ENCODE measurements at regions of chr19 and their contacts with region 1.

Region 1: GRCh38 chr19:17470068-17470841 is at the start of gene SLC27A1:
- DNase-seq: peak; percentile 93
- ATAC-seq: peak; percentile 90
- H3K4me3 Mint-ChIP-seq: peak within 1 kb of the TSS; percentile 86
- H3K27ac Mint-ChIP-seq: peak within 1 kb of the TSS; percentile 91
- H3K4me1 Mint-ChIP-seq: peaks cover 25% of the 10 kb centered on the region
- H3K27me3 Mint-ChIP-seq: no peaks in the 10 kb centered on the region
- total RNA-seq, gene SLC27A1: 2.2 to 2.7 TPM

Region 2: DNA sequence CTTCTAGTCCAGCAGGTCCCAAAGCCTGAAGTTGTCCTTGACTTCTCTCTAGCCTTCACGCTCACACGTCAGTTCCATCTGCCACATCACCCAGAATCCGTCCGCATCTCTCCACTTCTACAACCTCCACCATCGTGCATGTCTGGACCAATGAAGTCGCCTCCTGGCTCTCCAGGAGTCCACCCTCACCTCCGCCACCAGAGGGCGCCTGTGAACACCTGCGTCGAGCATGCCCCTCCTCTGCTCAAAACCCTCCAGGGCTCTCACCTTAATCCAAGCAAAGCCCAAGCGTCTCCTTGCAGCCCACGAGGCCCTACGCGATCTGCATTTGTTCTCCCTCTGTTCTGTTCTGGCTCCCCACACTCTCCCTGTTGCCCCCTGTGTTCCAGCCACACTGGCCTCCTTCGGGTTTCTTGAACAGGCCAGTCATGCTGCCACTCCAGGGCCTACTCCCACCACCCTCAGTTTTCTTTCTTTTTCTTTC is 209.4 kb before region 1 on chr19:
- CTCF ChIA-PET with region 1: no interaction called
- POLR2A ChIA-PET with region 1: no interaction called
- intact Hi-C with region 1: loop called in 1 of 2 experiments (anchors 1 kb)
- DNase-seq: peak; percentile 96
- ATAC-seq: peak; percentile 100
- H3K4me3 Mint-ChIP-seq: no peak overlapping the region
- H3K27ac Mint-ChIP-seq: peak overlapping the region; percentile 56
- H3K4me1 Mint-ChIP-seq: peaks cover 6% of the 10 kb centered on the region
- H3K27me3 Mint-ChIP-seq: no peaks in the 10 kb centered on the region

Region 3: GRCh38 chr19:17336872-17337722 is 133.2 kb before region 1 on chr19 and contains the start of gene GTPBP3:
- CTCF ChIA-PET with region 1: interaction called, 4 read pairs
- POLR2A ChIA-PET with region 1: no interaction called
- intact Hi-C with region 1: loop called in 1 of 2 experiments (anchors 5 kb)
- DNase-seq: peak; percentile 98
- ATAC-seq: peak; percentile 89
- H3K4me3 Mint-ChIP-seq: peak within 1 kb of the TSS; percentile 98
- H3K27ac Mint-ChIP-seq: peak within 1 kb of the TSS; percentile 98
- H3K4me1 Mint-ChIP-seq: peaks cover 25% of the 10 kb centered on the region
- H3K27me3 Mint-ChIP-seq: no peaks in the 10 kb centered on the region
- total RNA-seq, gene GTPBP3: 37.3 to 39.8 TPM

Region 4: GRCh38 chr19:17419621-17420466 is 50.4 kb before region 1 on chr19 and contains the start of gene MVB12A:
- CTCF ChIA-PET with region 1: no interaction called
- POLR2A ChIA-PET with region 1: no interaction called
- intact Hi-C with region 1: loop called in 1 of 2 experiments (anchors 1 kb)
- DNase-seq: peak; percentile 97
- ATAC-seq: peak; percentile 95
- H3K4me3 Mint-ChIP-seq: peak within 1 kb of the TSS; percentile 91
- H3K27ac Mint-ChIP-seq: peak within 1 kb of the TSS; percentile 87
- H3K4me1 Mint-ChIP-seq: peaks cover 11% of the 10 kb centered on the region
- H3K27me3 Mint-ChIP-seq: no peaks in the 10 kb centered on the region
- total RNA-seq, gene MVB12A: 27.6 to 32.6 TPM

Region 5: GRCh38 chr19:17511724-17512573 is 41.7 kb after region 1 on chr19:
- CTCF ChIA-PET with region 1: interaction called, 3 read pairs
- POLR2A ChIA-PET with region 1: interaction called, 6 read pairs
- intact Hi-C with region 1: loop called in 1 of 2 experiments (anchors 1 kb)
- DNase-seq: peak; percentile 92
- ATAC-seq: peak; percentile 52
- H3K4me3 Mint-ChIP-seq: peak overlapping the region; percentile 95
- H3K27ac Mint-ChIP-seq: peak overlapping the region; percentile 88
- H3K4me1 Mint-ChIP-seq: peaks cover 39% of the 10 kb centered on the region
- H3K27me3 Mint-ChIP-seq: no peaks in the 10 kb centered on the region

Region 6: DNA sequence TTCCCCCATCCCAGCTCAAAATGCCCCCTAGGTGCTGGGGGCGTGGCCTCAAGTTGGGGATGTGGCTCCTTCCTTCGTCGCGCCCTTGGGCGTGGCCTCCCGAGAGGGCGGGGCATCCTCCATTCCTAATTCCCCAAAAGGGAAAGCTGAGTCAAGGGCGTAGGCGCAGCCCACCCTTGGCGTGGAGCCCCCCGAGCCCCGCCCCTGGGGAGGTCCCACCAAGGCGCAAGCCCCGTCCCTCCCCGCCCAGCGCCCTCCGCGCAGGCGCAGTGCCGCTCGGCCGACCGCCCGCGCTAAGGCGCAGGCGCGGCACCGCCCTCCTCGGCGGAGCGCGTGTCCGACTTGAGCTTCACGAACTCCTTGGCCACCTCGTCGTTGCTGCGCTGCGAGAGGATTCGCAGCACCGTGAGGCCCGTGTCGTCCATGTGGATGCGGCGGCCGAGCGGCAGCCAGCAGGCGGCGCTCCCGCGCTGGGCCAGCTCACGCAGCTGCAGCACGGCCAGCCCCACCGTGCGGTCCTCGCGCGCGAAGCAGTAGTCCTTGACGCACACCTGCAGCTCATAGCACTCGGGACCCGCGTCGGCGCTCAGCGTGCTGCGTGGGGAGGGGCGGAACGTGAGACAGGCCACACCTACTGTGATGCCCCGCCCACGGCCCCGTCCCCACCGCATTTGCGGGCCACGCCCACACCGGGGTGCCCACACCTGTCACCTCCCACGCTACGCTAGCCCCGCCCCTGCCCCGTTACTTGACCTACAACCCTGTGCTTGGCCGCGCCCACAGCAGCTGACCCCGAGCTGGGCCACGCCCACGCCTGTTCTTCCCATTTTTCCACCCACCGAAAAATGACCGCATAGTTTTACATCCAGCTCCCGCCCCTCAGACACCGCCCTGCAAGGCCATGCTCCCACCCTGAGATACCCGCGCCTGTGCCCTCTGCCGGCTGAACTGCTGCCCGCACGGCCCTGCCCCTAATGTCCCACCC is 135.8 kb after region 1 on chr19:
- CTCF ChIA-PET with region 1: interaction called, 3 read pairs
- POLR2A ChIA-PET with region 1: no interaction called
- intact Hi-C with region 1: loop called in 1 of 2 experiments (anchors 1 kb)
- DNase-seq: peak; percentile 90
- ATAC-seq: peak; percentile 89
- H3K4me3 Mint-ChIP-seq: peak overlapping the region; percentile 65
- H3K27ac Mint-ChIP-seq: no peak overlapping the region
- H3K4me1 Mint-ChIP-seq: peaks cover 8% of the 10 kb centered on the region
- H3K27me3 Mint-ChIP-seq: peaks cover 29% of the 10 kb centered on the region